ENCODE measurements at regions of chr9 and their contacts with region 1.

Region 1: GRCh38 chr9:119453490-119453911 is 84.3 kb upstream of the BRINP1 start:
- DNase-seq: no peak
- H3K4me3 ChIP-seq: no peak overlapping the region
- H3K27ac ChIP-seq: no peak overlapping the region
- H3K4me1 ChIP-seq: no peaks in the 10 kb centered on the region
- H3K27me3 ChIP-seq: no peaks in the 10 kb centered on the region
- CTCF ChIP-seq: no peak
- POLR2A ChIP-seq: no peak

Region 2: DNA sequence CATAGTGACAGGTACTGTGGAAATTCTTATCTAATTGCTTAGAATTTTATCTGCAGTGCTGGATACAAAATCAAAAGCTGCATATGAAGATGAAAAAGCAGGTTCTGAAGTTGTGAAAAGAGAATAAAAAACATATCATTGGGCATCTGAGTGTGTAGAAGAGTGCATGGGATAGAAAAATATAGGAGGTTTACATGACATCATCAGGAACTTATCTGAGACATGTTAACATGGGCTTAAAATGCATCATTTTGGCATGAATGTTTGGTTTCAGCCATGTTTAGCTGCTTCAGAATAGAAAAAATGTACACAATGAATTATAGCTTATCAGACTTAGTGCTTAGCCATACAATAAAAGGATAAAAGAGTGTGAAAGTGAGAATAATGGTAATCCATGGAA is 873.4 kb before region 1 on chr9:
- intact Hi-C with region 1: loop called (anchors 5 kb)
- DNase-seq: no peak
- H3K4me3 ChIP-seq: no peak overlapping the region
- H3K27ac ChIP-seq: no peak overlapping the region
- H3K4me1 ChIP-seq: no peaks in the 10 kb centered on the region
- H3K27me3 ChIP-seq: no peaks in the 10 kb centered on the region
- CTCF ChIP-seq: no peak
- POLR2A ChIP-seq: no peak

Region 3: DNA sequence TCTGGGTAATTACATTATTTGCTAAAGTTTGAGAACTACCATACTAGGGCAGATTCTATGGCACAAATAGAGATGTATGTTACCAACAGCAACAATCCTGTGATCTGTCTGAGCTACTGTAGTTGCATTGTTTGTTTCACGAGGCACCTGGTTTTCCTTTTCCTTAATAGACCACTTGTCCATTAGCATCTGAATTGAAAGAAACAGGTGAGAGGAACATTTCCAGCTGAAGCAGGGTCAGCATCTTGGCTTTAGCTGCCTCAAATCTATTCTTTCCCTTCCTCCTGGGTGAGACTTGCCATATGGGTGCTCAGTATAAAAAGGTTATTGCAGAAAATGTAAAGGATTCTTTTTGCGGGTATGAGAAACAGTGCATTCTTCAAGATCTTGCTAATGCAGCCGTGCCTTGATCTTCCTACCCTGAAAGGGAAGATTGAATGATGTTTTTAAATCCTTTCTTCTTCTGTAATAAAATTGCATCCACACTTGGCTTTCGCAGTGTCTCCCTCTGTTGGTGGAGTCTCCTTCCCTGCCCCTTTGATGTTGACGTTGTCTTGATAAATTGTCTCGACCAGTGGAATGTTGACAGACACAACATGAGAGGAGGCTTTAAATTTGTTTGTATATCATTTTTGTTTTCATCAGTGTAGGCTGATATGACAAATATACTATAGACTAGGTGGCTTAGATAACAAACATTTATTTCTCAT is 33.8 kb after region 1 on chr9:
- intact Hi-C with region 1: no loop called
- DNase-seq: no peak
- H3K4me3 ChIP-seq: no peak overlapping the region
- H3K27ac ChIP-seq: no peak overlapping the region
- H3K4me1 ChIP-seq: no peaks in the 10 kb centered on the region
- H3K27me3 ChIP-seq: no peaks in the 10 kb centered on the region
- CTCF ChIP-seq: no peak
- POLR2A ChIP-seq: no peak

Region 4: DNA sequence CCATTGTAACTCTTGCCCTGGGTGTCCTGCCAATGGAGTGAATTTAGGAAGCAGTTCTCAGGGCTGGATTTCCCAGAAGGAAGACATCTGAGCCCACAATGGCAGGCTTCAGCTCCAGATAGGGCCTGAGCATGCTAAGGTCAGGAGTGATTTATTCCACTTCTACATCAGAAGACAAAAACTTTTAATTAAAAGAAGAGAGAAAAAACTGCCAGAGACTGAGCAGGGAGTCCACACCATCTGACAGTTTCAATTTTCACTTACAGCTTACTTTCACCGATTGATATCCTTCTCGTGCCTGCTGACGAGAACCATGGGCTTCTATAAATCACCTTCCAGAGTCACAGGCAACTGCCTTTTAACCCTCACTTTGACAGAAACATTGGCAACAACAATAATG is 144.0 kb after region 1 on chr9:
- intact Hi-C with region 1: no loop called
- DNase-seq: no peak
- H3K4me3 ChIP-seq: no peak overlapping the region
- H3K27ac ChIP-seq: no peak overlapping the region
- H3K4me1 ChIP-seq: no peaks in the 10 kb centered on the region
- H3K27me3 ChIP-seq: no peaks in the 10 kb centered on the region
- CTCF ChIP-seq: no peak
- POLR2A ChIP-seq: no peak

Measured in vagina (tissue), 2 donors.